ENCODE measurements at regions of chr7 and their contacts with region 1.

Region 1: GRCh38 chr7:67302113-67303039 is 305.7 kb downstream of the TYW1 start:
- DNase-seq: peak; percentile 96
- CTCF ChIP-seq: no peak

Region 2: GRCh38 chr7:67033251-67033650 is 269.1 kb before region 1 on chr7:
- in situ Hi-C with region 1: loop called (anchors 25 kb)
- DNase-seq: no peak
- CTCF ChIP-seq: no peak

Region 3: DNA sequence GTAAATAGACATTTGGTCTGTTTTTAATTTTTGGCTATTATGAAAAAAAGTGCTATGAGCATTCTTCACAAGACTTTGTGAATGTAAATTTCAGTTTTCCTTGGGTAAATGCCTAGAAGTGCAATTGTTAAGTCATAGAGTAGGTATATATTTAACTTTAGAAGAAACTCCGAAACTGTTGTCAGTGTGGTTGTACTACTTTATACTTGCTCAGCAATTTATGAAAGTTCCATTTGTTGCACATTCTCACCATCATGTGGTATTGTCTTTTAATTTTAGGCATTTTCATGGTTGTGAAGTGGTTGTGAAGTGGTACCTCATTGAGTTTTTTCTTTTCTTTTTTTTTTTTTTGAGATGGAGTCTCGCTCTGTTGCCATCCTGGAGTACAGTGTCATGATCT is 245.7 kb before region 1 on chr7:
- in situ Hi-C with region 1: no loop called
- DNase-seq: no peak
- CTCF ChIP-seq: no peak

Region 4: GRCh38 chr7:67637027-67637358 is 334.6 kb after region 1 on chr7:
- in situ Hi-C with region 1: no loop called
- DNase-seq: no peak
- CTCF ChIP-seq: no peak

Region 5: DNA sequence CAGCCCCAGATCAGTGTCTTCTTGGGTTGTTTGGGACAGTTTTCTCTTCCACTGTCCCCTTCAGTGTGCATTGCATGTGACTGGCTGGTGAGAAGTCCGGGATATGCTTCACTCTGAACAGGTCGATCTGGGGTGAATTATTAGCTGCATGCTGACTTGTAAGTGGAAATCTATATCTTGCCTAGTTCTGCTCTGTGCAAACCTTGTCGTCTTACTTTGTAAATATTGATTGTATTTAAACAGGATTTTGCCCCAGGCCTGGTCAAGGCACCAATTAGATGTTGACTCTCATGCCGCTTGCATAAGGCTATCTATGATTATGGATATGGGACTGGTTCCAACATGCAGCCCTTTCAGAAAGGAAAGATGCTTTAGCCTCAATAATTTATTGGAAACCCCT is 364.0 kb after region 1 on chr7:
- in situ Hi-C with region 1: no loop called
- DNase-seq: no peak
- CTCF ChIP-seq: no peak